MCF 10A (cell line): ENCODE measurements at regions of chr1 and their contacts with region 1.

Region 1: GRCh38 chr1:48916130-48917069 is 139.7 kb upstream of the BEND5 start:
- DNase-seq: peak; percentile 70
- H3K4me3 Mint-ChIP-seq: no peak overlapping the region
- H3K27ac Mint-ChIP-seq: no peak overlapping the region
- H3K4me1 Mint-ChIP-seq: peaks cover 8% of the 10 kb centered on the region
- H3K27me3 Mint-ChIP-seq: no peaks in the 10 kb centered on the region
- CTCF ChIP-seq: peak; percentile 44

Region 2: DNA sequence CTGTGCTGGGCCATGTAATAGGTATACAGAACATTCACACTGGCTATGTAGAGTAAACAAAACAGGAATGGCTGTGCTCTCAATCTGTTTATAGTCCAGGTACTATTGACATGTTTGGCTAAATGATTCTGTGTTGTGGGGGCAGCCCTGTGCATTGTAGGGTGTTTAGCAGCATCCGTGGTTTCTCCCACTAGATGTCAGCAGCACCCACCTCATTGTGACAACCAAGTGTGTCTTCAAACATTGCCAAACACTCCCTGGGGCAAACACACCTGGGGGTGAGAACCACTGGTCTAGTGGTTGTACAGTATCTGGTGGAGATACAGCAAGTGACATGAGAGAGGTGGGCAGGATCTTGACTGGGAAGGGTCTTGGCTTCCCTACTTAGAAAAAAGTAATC is 364.0 kb before region 1 on chr1:
- CTCF ChIA-PET with region 1: interaction called, 4 read pairs
- POLR2A ChIA-PET with region 1: no interaction called
- intact Hi-C with region 1: loop called (anchors 5 kb)
- DNase-seq: peak; percentile 47
- H3K4me3 Mint-ChIP-seq: no peak overlapping the region
- H3K27ac Mint-ChIP-seq: no peak overlapping the region
- H3K4me1 Mint-ChIP-seq: peaks cover 13% of the 10 kb centered on the region
- H3K27me3 Mint-ChIP-seq: peaks cover 20% of the 10 kb centered on the region
- CTCF ChIP-seq: peak; percentile 23

Region 3: GRCh38 chr1:48572646-48573261 is 343.6 kb before region 1 on chr1:
- CTCF ChIA-PET with region 1: interaction called, 9 read pairs
- POLR2A ChIA-PET with region 1: no interaction called
- intact Hi-C with region 1: loop called (anchors 5 kb)
- DNase-seq: peak; percentile 62
- H3K4me3 Mint-ChIP-seq: no peak overlapping the region
- H3K27ac Mint-ChIP-seq: no peak overlapping the region
- H3K4me1 Mint-ChIP-seq: peaks cover 7% of the 10 kb centered on the region
- H3K27me3 Mint-ChIP-seq: peaks cover 11% of the 10 kb centered on the region
- CTCF ChIP-seq: peak; percentile 75

Region 4: DNA sequence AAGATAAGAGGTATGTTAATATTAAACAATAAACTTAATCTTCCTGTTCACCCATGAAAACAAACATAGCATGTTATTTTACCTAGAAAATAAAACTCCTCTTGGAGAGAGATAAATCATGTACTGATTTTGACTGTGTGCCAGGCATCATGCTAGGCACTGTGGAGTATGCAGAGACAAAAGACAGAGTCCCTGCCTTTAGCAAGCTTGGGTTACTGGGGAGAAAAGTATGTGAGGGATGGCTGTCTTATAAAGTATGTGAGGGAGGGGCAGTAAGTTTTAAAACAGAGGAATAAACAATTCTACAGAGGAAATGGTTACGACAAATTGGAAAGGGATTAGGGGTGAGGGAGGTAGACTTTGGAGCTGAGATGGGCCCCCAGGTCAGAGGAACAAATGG is 10.2 kb before region 1 on chr1:
- CTCF ChIA-PET with region 1: interaction called, 24 read pairs
- POLR2A ChIA-PET with region 1: no interaction called
- intact Hi-C with region 1: no loop called
- DNase-seq: no peak
- H3K4me3 Mint-ChIP-seq: no peak overlapping the region
- H3K27ac Mint-ChIP-seq: no peak overlapping the region
- H3K4me1 Mint-ChIP-seq: no peaks in the 10 kb centered on the region
- H3K27me3 Mint-ChIP-seq: no peaks in the 10 kb centered on the region
- CTCF ChIP-seq: no peak

Region 5: DNA sequence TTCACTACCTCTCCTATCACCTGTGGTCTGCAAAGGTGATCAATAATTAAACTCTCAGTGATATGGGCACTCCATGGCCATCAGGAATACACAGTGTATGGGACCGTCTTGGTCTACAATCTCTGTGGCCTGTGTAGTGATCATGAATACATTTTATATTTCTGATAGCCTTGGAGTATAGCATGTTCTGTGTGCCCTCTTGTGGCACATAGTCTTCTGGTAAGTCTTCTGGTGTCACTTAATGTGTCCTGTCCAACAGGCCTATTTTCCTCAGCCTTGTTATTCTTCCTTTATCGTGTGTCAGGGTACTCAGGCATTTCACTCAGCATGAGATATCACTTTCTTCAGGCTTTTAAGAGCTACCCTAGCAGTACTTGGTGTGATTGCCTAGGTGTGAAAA is 713.8 kb after region 1 on chr1:
- CTCF ChIA-PET with region 1: interaction called, 5 read pairs
- POLR2A ChIA-PET with region 1: no interaction called
- intact Hi-C with region 1: loop called (anchors 1 kb)
- DNase-seq: no peak
- H3K4me3 Mint-ChIP-seq: no peak overlapping the region
- H3K27ac Mint-ChIP-seq: no peak overlapping the region
- H3K4me1 Mint-ChIP-seq: no peaks in the 10 kb centered on the region
- H3K27me3 Mint-ChIP-seq: no peaks in the 10 kb centered on the region
- CTCF ChIP-seq: no peak

Region 6: DNA sequence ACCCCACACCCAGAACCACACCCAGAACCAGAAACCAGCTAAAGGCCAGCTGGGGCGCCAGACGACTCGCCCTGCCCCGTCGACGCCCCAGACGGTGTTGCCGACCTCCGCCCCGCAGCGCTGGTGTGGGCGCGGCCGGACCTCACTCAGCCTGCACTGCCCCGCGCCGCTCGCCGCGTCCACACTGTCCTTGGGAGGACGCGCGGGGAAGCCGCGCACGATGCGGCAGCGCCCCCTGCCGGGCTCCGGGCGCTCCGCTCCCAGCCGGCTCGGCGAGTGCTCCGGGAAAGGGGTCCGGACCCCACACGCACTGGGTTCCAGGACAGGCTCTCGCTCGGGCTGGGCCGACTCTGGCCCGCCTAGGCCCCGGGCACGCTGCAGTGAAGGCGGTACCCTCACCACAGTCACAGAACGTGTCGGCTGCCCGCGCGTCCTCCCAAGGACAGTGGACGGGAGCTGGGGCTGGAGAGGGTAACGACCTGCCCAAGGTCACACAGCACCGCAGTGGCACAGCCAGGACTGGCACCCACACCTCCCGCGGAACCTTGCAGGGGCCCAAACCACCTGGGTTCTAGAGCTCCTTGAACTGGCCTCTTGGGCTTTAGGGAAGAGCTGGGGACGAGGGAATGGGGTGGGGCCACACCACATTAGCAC is 1416.7 kb after region 1 on chr1:
- CTCF ChIA-PET with region 1: no interaction called
- POLR2A ChIA-PET with region 1: no interaction called
- intact Hi-C with region 1: loop called (anchors 5 kb)
- DNase-seq: peak; percentile 40
- H3K4me3 Mint-ChIP-seq: peak overlapping the region; percentile 49
- H3K27ac Mint-ChIP-seq: no peak overlapping the region
- H3K4me1 Mint-ChIP-seq: no peaks in the 10 kb centered on the region
- H3K27me3 Mint-ChIP-seq: peaks cover 58% of the 10 kb centered on the region
- CTCF ChIP-seq: peak; percentile 59